ENCODE measurements at regions of chr11 and their contacts with region 1.

Region 1: GRCh38 chr11:27158722-27159679 is 118.4 kb downstream of the BBOX1 start:
- DNase-seq: no peak
- H3K4me3 Mint-ChIP-seq: no peak overlapping the region
- H3K27ac Mint-ChIP-seq: no peak overlapping the region
- H3K4me1 Mint-ChIP-seq: no peaks in the 10 kb centered on the region
- H3K27me3 Mint-ChIP-seq: no peaks in the 10 kb centered on the region

Region 2: DNA sequence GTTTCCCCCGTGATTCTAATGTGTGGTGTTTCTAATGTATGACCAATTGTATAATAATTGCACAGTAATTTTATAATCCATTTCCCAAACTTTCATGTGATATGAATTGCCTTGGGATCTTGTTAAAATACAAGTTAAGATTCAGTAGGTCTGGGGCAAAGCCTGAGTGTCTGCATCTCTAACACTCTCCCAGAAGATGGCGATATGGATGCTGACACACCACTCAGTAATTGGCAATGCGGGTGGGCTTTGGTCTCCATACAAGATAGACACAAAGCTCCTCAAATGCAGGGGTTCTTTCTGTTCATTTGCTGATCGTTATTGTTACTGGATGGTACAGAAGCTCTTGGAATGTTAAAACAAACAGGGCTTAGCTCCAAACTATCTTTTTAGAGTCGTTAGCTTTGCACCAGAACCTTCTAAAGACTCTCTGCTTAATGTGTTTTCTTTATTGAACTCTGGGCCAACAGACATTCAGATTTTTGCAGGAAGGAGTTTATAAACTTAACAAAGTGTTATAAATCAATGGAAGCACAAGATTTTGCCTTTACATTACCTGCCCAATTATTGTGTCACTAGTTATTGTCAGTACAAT is 872.4 kb before region 1 on chr11:
- intact Hi-C with region 1: loop called (anchors 10 kb)
- DNase-seq: no peak
- H3K4me3 Mint-ChIP-seq: no peak overlapping the region
- H3K27ac Mint-ChIP-seq: no peak overlapping the region
- H3K4me1 Mint-ChIP-seq: peaks cover 4% of the 10 kb centered on the region
- H3K27me3 Mint-ChIP-seq: no peaks in the 10 kb centered on the region

Region 3: DNA sequence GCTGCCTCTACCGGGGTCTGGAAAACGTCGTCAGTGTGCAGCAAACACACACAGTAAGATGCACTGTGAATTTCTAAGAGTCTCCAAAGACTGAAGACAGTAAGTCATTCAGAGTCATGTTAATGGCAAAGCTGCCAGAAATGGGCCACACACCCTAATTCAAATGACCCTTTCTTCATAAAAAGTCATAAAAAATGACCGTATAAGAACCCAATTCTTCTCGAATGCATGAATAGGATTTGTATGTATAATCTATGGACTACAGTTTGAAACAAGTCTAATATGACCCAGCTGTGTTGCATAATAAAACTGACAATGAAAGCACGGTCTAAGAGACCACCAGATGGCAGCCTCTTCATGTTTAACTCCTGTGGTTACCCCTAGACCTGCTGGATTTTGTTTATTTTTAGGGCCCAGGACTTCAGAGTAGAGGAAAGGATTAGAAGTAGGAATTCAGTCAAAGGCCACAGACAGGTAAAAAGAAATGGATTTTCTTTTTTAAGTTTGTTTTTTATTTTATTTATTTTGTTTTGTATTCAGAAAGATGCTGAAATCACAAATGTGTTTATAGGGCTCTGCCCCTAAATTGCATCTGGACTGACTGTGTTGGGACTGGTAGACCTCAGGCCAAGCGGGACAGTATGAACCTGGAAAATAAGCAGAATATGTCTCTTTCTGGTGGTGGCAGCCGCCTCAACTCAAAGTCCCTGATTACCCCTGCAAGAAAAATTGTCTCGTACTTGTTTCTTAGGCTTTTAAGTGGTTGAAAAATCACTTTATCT is 405.1 kb before region 1 on chr11:
- intact Hi-C with region 1: loop called (anchors 2 kb)
- DNase-seq: no peak
- H3K4me3 Mint-ChIP-seq: no peak overlapping the region
- H3K27ac Mint-ChIP-seq: no peak overlapping the region
- H3K4me1 Mint-ChIP-seq: no peaks in the 10 kb centered on the region
- H3K27me3 Mint-ChIP-seq: no peaks in the 10 kb centered on the region

Region 4: GRCh38 chr11:27055118-27055557 is 103.9 kb before region 1 on chr11:
- intact Hi-C with region 1: no loop called
- DNase-seq: no peak
- H3K4me3 Mint-ChIP-seq: no peak overlapping the region
- H3K27ac Mint-ChIP-seq: no peak overlapping the region
- H3K4me1 Mint-ChIP-seq: no peaks in the 10 kb centered on the region
- H3K27me3 Mint-ChIP-seq: no peaks in the 10 kb centered on the region

Measured in activated T-helper 2 cell treated with anti-CD3 and anti-CD28 coated beads, Interferon-gamma antibody, Interleukin-2, Interleukin-4, amounts not matched to agents 10 μg/mL and 5 μg/mL and 100 μg/mL, durations not matched to agents 14 hours and 24 hours and 36 hours (primary cell).